ENCODE measurements at regions of chr18 and their contacts with region 1.

Region 1: GRCh38 chr18:616380-616995 is 19.7 kb downstream of the CLUL1 start:
- DNase-seq: peak; percentile 56 to 69 (median 57)
- ATAC-seq: peak; percentile 66
- H3K4me3 ChIP-seq: no peak overlapping the region
- H3K27ac ChIP-seq: no peak overlapping the region
- H3K4me1 ChIP-seq: peaks cover 0 to 6% of the 10 kb centered on the region in 2 experiments; a peak in 3 of 5 replicates
- H3K27me3 ChIP-seq: peaks cover 2 to 4% of the 10 kb centered on the region in 2 experiments; a peak in 2 of 5 replicates
- CTCF ChIP-seq: peak; percentile 68 to 93 (median 77); a peak in 5 of 6 replicates
- EP300 ChIP-seq: no peak
- POLR2A ChIP-seq: no peak
- RAD21 ChIP-seq: peak; percentile 99

Region 2: GRCh38 chr18:136433-136832 is 480.1 kb before region 1 on chr18:
- CTCF ChIA-PET with region 1: no interaction called
- POLR2A ChIA-PET with region 1: no interaction called
- in situ Hi-C with region 1: no loop called
- intact Hi-C with region 1: no loop called
- DNase-seq: peak; percentile 46 to 77 (median 71)
- ATAC-seq: peak; percentile 97
- H3K4me3 ChIP-seq: no peak overlapping the region
- H3K27ac ChIP-seq: no peak overlapping the region
- H3K4me1 ChIP-seq: peaks cover 3 to 5% of the 10 kb centered on the region in 2 experiments; a peak in 2 of 5 replicates
- H3K27me3 ChIP-seq: no peaks in the 10 kb centered on the region
- CTCF ChIP-seq: no peak
- EP300 ChIP-seq: no peak
- POLR2A ChIP-seq: no peak
- RAD21 ChIP-seq: no peak

Region 3: GRCh38 chr18:499551-500408 is 116.7 kb before region 1 on chr18:
- CTCF ChIA-PET with region 1: interaction called, 3 read pairs
- POLR2A ChIA-PET with region 1: no interaction called
- in situ Hi-C with region 1: no loop called
- intact Hi-C with region 1: loop called (anchors 5 kb)
- DNase-seq: peak in 1 of 4 experiments; percentile 14
- ATAC-seq: no peak
- H3K4me3 ChIP-seq: no peak overlapping the region
- H3K27ac ChIP-seq: no peak overlapping the region
- H3K4me1 ChIP-seq: peaks cover 0 to 18% of the 10 kb centered on the region in 2 experiments; a peak in 2 of 5 replicates
- H3K27me3 ChIP-seq: peaks cover 31 to 37% of the 10 kb centered on the region in 2 experiments
- CTCF ChIP-seq: no peak
- EP300 ChIP-seq: no peak
- POLR2A ChIP-seq: no peak
- RAD21 ChIP-seq: no peak

Region 4: GRCh38 chr18:525036-525797 is 91.3 kb before region 1 on chr18:
- CTCF ChIA-PET with region 1: no interaction called
- POLR2A ChIA-PET with region 1: no interaction called
- in situ Hi-C with region 1: no loop called
- intact Hi-C with region 1: loop called (anchors 2 kb)
- DNase-seq: peak in 2 of 4 experiments; percentile 20 to 26
- ATAC-seq: peak; percentile 87
- H3K4me3 ChIP-seq: no peak overlapping the region
- H3K27ac ChIP-seq: no peak overlapping the region
- H3K4me1 ChIP-seq: no peaks in the 10 kb centered on the region; a peak in 1 of 5 replicates
- H3K27me3 ChIP-seq: peaks cover 5 to 10% of the 10 kb centered on the region in 2 experiments; a peak in 3 of 5 replicates
- CTCF ChIP-seq: peak in 1 of 3 experiments; percentile 15; a peak in 1 of 6 replicates
- EP300 ChIP-seq: no peak
- POLR2A ChIP-seq: no peak
- RAD21 ChIP-seq: peak; percentile 3 to 43; a peak in 3 of 4 replicates

Region 5: DNA sequence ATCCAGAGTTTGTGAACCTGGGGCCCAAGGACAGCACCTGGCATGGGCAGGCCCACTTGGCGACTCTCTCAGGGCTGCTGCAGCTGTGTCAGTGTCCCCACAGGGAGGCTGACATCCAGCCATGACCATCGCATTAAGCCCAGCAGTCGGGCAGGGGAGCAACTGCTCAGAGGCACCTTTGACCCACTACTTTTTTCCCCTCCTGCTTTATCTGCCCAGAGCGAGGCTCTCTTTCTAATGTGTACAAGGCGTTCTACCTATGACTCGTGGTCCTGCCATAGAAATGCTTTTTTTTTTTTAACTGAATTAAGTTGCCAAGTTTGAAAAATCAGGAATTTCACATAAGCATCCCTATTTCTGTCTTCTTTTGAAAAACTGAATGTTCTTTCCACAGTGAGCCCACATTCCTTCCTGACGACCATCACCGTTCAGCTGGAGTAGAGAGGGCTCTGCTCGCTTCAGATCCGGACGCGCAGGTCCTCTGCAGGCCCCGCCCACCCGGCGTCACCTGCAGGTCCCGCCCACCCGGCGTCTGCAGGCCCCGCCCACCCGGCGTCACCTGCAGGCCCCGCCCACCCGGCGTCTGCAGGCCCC is 20.1 kb before region 1 on chr18:
- CTCF ChIA-PET with region 1: interaction called, 10 read pairs
- POLR2A ChIA-PET with region 1: interaction called, 3 read pairs
- in situ Hi-C with region 1: no loop called
- intact Hi-C with region 1: no loop called
- DNase-seq: peak; percentile 85 to 90 (median 88)
- ATAC-seq: peak; percentile 92
- H3K4me3 ChIP-seq: peak overlapping the region; percentile 25
- H3K27ac ChIP-seq: no peak overlapping the region
- H3K4me1 ChIP-seq: peaks cover 7 to 11% of the 10 kb centered on the region in 2 experiments
- H3K27me3 ChIP-seq: peaks cover 3 to 4% of the 10 kb centered on the region in 2 experiments; a peak in 3 of 5 replicates
- CTCF ChIP-seq: no peak
- EP300 ChIP-seq: no peak
- POLR2A ChIP-seq: peak; percentile 54; the same call in 1 of the 2 replicates
- RAD21 ChIP-seq: no peak